Activated naive CD8-positive, alpha-beta T cell treated with anti-CD3 and anti-CD28 coated beads, Interleukin-2, amount 10 ng/mL, durations not matched to agents 7 days and 5 days (primary cell): ENCODE measurements at regions of chr6 and their contacts with region 1.

Region 1: DNA sequence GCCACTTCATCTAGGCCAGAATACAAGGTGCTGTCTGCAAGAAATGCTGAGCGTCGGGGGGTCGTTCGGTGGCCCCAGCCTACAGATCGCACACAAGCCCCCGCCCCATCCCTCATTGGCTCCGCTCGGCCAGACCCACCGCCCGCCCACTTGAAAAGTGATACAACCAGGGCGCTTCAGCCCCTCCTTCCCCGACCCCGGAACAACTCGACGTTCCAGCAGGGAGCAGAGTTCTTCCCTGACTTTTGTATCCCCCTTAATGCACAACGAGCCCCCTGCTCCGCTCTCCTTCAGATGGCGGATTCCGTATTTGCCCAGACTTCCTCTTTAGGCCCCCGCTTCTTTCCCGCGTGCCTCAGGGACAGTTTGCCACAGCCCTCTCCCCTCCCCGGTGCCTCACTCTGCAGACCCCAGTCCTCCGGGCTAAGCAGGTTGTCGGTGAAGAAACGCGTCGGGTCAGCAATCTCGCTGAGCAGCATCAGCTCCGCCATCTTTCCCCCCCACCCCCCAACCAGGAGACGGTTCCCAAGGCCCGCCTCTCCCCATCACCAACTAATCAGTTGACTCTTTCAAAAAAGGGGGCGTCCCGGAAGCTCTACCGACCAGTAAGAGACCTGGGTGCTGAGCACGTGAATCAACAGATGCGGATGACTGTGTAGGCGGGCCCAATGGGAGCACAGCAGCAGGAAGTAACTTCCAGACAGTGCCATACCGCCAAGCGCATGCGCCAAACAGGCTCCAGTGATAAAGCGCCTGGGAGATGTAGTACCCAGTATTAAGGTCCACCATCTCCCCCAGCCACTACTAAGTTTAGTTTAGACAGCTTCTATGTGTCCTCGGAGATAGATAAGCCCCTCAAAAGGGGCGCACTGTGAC is at the start of gene ATF6B:
- DNase-seq: peak; percentile 87
- ATAC-seq: peak; percentile 95
- H3K4me3 Mint-ChIP-seq: peak within 1 kb of the TSS; percentile 99
- H3K27ac Mint-ChIP-seq: peak within 1 kb of the TSS; percentile 99
- H3K4me1 Mint-ChIP-seq: peaks cover 38% of the 10 kb centered on the region
- H3K27me3 Mint-ChIP-seq: peaks cover 1% of the 10 kb centered on the region
- total RNA-seq, gene ATF6B: 136 to 147 TPM

Region 2: GRCh38 chr6:32190054-32190851 is 62.3 kb after region 1 on chr6 and contains the start of gene PBX2:
- POLR2A ChIA-PET with region 1: interaction called, 18 read pairs
- DNase-seq: peak; percentile 74
- ATAC-seq: peak; percentile 62
- H3K4me3 Mint-ChIP-seq: peak within 1 kb of the TSS; percentile 98
- H3K27ac Mint-ChIP-seq: peak within 1 kb of the TSS; percentile 98
- H3K4me1 Mint-ChIP-seq: peaks cover 46% of the 10 kb centered on the region
- H3K27me3 Mint-ChIP-seq: no peaks in the 10 kb centered on the region
- total RNA-seq, gene PBX2: 107 to 112 TPM

Region 3: DNA sequence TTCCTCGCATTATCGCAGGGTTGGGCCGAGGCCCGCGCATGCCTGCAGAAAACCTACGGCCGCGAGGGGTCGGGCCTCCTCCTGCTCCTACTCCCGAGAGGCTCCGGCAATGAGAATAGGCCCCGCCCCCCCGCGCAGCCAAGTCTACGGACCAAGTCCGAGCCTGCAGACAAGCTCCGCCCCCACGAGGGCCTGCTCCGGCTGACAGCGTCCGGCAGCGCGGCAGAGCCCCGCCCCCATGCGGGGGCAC is 67.6 kb after region 1 on chr6:
- POLR2A ChIA-PET with region 1: interaction called, 18 read pairs
- DNase-seq: peak; percentile 100
- ATAC-seq: peak; percentile 90
- H3K4me3 Mint-ChIP-seq: peak overlapping the region; percentile 96
- H3K27ac Mint-ChIP-seq: peak overlapping the region; percentile 98
- H3K4me1 Mint-ChIP-seq: peaks cover 24% of the 10 kb centered on the region
- H3K27me3 Mint-ChIP-seq: no peaks in the 10 kb centered on the region